Naive thymus-derived CD4-positive, alpha-beta T cell (primary cell): ENCODE measurements at regions of chr1 and their contacts with region 1.

Region 1: DNA sequence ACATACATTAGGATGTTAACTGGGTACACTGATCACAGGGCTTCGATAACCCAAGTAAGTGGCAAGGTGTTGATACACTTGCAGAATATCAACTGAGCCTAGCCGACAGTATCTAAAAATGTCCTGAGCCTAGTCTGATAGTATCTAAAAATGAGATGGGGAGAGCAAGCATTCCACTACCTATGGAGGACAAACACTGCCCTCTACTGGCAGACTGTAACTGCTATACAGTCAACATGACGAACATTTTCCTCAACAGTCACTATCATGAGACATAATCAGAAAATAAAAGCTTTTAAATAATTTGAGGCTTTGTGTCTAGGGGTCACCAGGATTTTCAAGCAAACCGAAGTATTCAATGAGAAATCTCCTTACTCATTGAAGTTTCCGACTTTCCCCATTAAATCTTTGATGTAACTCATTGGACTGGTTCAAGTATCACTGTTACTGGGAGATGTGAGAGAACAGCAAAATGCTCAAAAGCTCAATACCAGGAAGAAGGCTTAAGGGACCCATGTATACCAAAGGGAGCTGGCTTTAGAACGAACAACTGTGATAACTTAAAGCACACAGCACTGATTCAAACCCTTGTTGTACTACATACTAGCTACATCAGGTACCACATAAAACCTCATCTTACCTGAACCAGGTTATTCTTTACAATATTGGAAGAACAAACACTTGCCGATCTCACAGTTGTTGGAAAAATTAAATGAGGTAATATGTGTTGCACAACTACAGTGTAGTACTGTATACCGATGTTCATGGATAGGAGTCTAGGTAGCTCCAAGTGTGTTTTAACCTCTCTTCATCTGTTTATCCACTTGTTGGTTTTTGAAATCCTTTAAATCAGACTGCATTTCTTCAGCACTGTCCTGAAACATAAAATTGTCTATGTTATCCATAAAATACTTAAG is 31.1 kb upstream of the SLC45A3 start:
- DNase-seq: peak in 8 of 9 donors; percentile 36 to 72 (median 64)
- ATAC-seq: peak; percentile 91
- H3K4me3 ChIP-seq: no peak overlapping the region
- H3K4me3 Mint-ChIP-seq: no peak overlapping the region
- H3K27ac ChIP-seq: no peak overlapping the region
- H3K27ac Mint-ChIP-seq: peak overlapping the region in 6 of 9 donors; percentile 7 to 87 (median 15)
- H3K4me1 ChIP-seq: no peaks in the 10 kb centered on the region
- H3K4me1 Mint-ChIP-seq: peaks cover 9 to 28% (median 20%) of the 10 kb centered on the region in 7 donors
- H3K27me3 ChIP-seq: no peaks in the 10 kb centered on the region
- H3K27me3 Mint-ChIP-seq: no peaks in the 10 kb centered on the region

Region 2: GRCh38 chr1:205528887-205529825 is 182.2 kb before region 1 on chr1:
- CTCF ChIA-PET with region 1: interaction called, 3 read pairs
- POLR2A ChIA-PET with region 1: no interaction called
- intact Hi-C with region 1: loop called (anchors 2 kb)
- DNase-seq: peak; percentile 58 to 90 (median 78)
- ATAC-seq: peak; percentile 82
- H3K4me3 ChIP-seq: no peak overlapping the region
- H3K4me3 Mint-ChIP-seq: peak overlapping the region in 9 of 10 donors; percentile 23 to 68 (median 62)
- H3K27ac ChIP-seq: no peak overlapping the region
- H3K27ac Mint-ChIP-seq: peak overlapping the region in 3 of 9 donors; percentile 8 to 58 (median 56)
- H3K4me1 ChIP-seq: no peaks in the 10 kb centered on the region
- H3K4me1 Mint-ChIP-seq: peaks cover 0 to 5% (median 0%) of the 10 kb centered on the region in 7 donors
- H3K27me3 ChIP-seq: no peaks in the 10 kb centered on the region
- H3K27me3 Mint-ChIP-seq: peaks cover 0 to 5% (median 0%) of the 10 kb centered on the region in 5 donors

Region 3: DNA sequence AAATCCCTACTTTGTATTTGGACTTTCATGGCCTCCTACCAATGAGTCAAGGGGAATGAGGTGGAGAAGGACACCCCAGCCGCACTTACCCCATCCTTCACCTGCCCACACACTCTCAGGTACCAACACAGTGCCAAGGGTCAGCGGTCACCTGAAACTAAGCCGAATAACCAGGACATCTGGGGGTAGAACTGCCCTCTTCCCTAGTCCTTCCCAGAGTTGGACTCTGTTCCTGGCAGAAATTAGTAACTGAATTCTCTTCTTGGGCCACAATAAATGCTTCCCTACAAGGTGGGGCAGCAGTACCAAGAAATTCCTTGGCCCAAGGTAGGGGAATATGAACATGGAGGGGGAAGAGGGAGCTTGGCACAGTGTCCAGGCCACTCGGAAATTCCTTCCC is 38.4 kb before region 1 on chr1:
- CTCF ChIA-PET with region 1: no interaction called
- POLR2A ChIA-PET with region 1: no interaction called
- intact Hi-C with region 1: no loop called
- DNase-seq: no peak
- ATAC-seq: no peak
- H3K4me3 ChIP-seq: no peak overlapping the region
- H3K4me3 Mint-ChIP-seq: no peak overlapping the region
- H3K27ac ChIP-seq: no peak overlapping the region
- H3K27ac Mint-ChIP-seq: no peak overlapping the region
- H3K4me1 ChIP-seq: no peaks in the 10 kb centered on the region
- H3K4me1 Mint-ChIP-seq: no peaks in the 10 kb centered on the region
- H3K27me3 ChIP-seq: no peaks in the 10 kb centered on the region
- H3K27me3 Mint-ChIP-seq: peaks cover 7 to 29% (median 19%) of the 10 kb centered on the region in 5 donors

Region 4: DNA sequence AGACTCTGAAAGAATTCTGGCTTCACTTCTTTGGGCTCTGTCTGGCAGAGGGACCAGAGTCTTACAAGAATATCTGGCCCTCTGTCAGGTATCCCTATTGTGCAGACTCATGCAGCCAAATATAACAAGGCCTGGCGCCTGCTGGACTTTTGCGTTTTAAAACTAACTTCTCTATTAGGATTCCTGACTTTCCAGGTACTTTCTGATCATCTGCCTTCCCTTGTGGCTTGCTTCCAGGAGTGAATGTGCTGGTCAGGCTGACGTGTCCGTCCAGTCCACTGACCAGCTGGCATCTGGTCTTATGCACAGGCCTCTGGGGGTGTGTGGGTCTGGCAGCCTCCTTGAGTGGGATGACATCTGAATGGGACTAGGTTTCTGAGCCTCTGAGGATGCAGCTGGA is 72.5 kb after region 1 on chr1:
- CTCF ChIA-PET with region 1: interaction called, 4 read pairs
- POLR2A ChIA-PET with region 1: no interaction called
- intact Hi-C with region 1: loop called (anchors 1 kb)
- DNase-seq: no peak
- ATAC-seq: no peak
- H3K4me3 ChIP-seq: no peak overlapping the region
- H3K4me3 Mint-ChIP-seq: no peak overlapping the region
- H3K27ac ChIP-seq: no peak overlapping the region
- H3K27ac Mint-ChIP-seq: no peak overlapping the region
- H3K4me1 ChIP-seq: peaks cover 0 to 8% of the 10 kb centered on the region in 2 donors
- H3K4me1 Mint-ChIP-seq: peaks cover 6 to 16% (median 9%) of the 10 kb centered on the region in 7 donors
- H3K27me3 ChIP-seq: no peaks in the 10 kb centered on the region
- H3K27me3 Mint-ChIP-seq: no peaks in the 10 kb centered on the region